Sigmoid colon (tissue), 7 donors: ENCODE measurements at regions of chr19 and their contacts with region 1.

Region 1: DNA sequence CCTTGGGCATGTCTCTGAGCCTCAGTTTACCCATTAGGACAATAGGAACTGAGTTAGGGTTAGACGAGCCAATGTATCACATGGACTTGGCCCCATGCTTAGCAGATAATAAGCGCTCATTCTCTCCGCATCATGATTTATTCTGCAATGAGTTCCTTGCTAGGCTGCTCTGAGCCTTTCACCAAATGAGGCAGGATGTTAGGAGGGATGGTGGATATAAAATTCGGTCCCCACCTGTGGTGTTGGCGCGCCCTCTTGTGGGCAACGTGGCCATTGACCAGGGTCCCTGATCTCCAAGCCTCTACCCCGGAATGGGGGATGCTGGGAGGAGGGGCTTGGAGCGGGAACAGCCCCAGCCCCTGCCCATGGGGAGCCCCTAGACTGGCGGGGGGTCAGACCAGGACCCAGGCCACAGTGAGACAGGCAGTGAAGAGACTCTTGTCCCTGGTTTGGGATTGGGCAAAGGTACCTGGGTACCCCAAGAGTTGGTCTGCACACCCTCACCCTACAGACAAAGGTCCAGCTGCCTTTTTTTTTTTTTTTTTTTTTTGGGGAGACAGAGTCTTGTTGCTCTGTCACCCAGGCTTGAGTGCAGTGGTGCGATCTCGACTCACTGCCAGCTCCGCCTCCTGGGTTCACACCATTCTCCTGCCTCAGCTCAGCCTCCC is 43.9 kb downstream of the CERS4 start:
- DNase-seq: peak; percentile 89
- H3K4me3 ChIP-seq: no peak overlapping the region
- H3K27ac ChIP-seq: peak overlapping the region in 1 of 4 donors; percentile 11
- H3K4me1 ChIP-seq: peaks cover 0 to 25% (median 21%) of the 10 kb centered on the region in 4 donors
- H3K27me3 ChIP-seq: no peaks in the 10 kb centered on the region
- CTCF ChIP-seq: peak; percentile 83 to 95 (median 90)
- EP300 ChIP-seq: no peak
- POLR2A ChIP-seq: no peak

Region 2: GRCh38 chr19:7852851-7853769 is 399.9 kb before region 1 on chr19:
- intact Hi-C with region 1: loop called (anchors 2 kb)
- DNase-seq: no peak
- H3K4me3 ChIP-seq: no peak overlapping the region
- H3K27ac ChIP-seq: peak overlapping the region in 2 of 4 donors; percentile 12 to 19
- H3K4me1 ChIP-seq: peaks cover 0 to 9% (median 7%) of the 10 kb centered on the region in 4 donors
- H3K27me3 ChIP-seq: peaks cover 0 to 48% (median 17%) of the 10 kb centered on the region in 3 donors
- CTCF ChIP-seq: peak; percentile 44 to 86 (median 60)
- EP300 ChIP-seq: no peak
- POLR2A ChIP-seq: no peak

Region 3: DNA sequence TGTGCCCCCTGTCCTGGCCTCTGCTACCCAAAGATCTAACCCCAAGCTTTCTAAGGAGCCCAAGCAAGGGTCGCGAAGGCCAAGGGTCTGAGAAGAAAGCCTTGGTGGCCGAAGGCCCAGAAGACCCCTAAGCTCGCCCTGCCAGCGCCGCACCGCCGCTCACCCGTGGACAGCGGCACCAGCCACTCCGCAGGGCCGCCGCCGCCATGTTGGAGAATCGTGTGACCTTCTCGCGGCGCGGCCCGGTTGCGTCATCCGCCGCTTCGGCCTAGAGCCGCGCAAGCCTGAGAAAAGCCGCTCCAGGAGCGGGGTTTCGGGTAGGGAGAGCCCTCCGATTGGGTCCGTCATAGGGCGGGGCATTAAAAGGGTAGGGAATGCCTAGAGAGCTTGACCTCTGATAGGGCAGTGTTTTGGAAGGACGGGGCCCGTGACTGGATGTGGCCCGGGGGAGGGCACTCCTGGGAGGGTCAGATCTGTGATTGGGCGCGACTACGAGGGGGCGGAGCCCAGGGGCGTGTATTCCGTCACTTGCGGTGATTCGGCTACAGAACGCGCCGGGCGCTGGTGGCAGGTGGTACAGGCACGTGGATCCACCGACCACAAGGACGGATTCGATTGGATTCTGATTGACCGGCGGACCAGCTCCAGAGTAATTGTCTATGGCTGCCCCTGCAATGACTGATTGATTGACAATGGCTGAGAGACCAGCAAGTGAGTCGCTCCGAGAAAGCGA is 309.4 kb before region 1 on chr19 and contains the start of gene TIMM44:
- intact Hi-C with region 1: loop called (anchors 1 kb)
- DNase-seq: peak; percentile 100
- H3K4me3 ChIP-seq: peak within 1 kb of the TSS; percentile 68 to 87 (median 75)
- H3K27ac ChIP-seq: peak within 1 kb of the TSS; percentile 94 to 99 (median 96)
- H3K4me1 ChIP-seq: peaks cover 3 to 53% (median 37%) of the 10 kb centered on the region in 4 donors
- H3K27me3 ChIP-seq: no peaks in the 10 kb centered on the region
- CTCF ChIP-seq: no peak
- EP300 ChIP-seq: no peak
- POLR2A ChIP-seq: peak; percentile 60 to 71
- total RNA-seq, gene TIMM44: 51.7 to 80.1 (median 78.6) TPM

Region 4: DNA sequence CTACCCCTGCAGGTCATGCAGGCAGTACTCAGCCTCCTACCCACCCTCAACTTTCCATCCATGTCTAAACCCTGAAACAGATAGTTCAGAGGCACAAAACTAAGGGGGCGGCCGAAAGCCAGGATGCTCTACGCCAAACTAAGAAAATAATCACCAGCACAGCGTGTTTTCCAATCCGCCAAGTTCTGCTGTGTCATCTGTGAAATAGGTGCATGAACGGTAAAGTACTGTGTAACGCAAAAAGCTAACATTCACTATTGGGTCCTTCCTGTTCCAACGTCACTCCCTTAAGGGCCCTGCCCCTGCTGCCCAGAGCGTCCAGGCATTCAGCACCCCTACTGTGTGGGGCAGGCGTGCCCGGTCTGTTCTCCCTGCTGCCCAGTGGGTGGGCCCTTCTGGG is 297.4 kb before region 1 on chr19:
- intact Hi-C with region 1: no loop called
- DNase-seq: no peak
- H3K4me3 ChIP-seq: no peak overlapping the region
- H3K27ac ChIP-seq: no peak overlapping the region
- H3K4me1 ChIP-seq: peaks cover 0 to 4% (median 0%) of the 10 kb centered on the region in 4 donors
- H3K27me3 ChIP-seq: no peaks in the 10 kb centered on the region
- CTCF ChIP-seq: no peak
- EP300 ChIP-seq: no peak
- POLR2A ChIP-seq: no peak

Region 5: GRCh38 chr19:8005534-8006256 is 247.4 kb before region 1 on chr19 and contains the start of gene ELAVL1:
- intact Hi-C with region 1: loop called (anchors 5 kb)
- DNase-seq: peak; percentile 93
- H3K4me3 ChIP-seq: peak within 1 kb of the TSS; percentile 63 to 85 (median 71)
- H3K27ac ChIP-seq: peak within 1 kb of the TSS; percentile 83 to 92 (median 86)
- H3K4me1 ChIP-seq: peaks cover 0 to 50% (median 44%) of the 10 kb centered on the region in 4 donors
- H3K27me3 ChIP-seq: no peaks in the 10 kb centered on the region
- CTCF ChIP-seq: no peak
- EP300 ChIP-seq: no peak
- POLR2A ChIP-seq: no peak
- total RNA-seq, gene ELAVL1: 15.8 to 20.3 (median 17.1) TPM

Region 6: DNA sequence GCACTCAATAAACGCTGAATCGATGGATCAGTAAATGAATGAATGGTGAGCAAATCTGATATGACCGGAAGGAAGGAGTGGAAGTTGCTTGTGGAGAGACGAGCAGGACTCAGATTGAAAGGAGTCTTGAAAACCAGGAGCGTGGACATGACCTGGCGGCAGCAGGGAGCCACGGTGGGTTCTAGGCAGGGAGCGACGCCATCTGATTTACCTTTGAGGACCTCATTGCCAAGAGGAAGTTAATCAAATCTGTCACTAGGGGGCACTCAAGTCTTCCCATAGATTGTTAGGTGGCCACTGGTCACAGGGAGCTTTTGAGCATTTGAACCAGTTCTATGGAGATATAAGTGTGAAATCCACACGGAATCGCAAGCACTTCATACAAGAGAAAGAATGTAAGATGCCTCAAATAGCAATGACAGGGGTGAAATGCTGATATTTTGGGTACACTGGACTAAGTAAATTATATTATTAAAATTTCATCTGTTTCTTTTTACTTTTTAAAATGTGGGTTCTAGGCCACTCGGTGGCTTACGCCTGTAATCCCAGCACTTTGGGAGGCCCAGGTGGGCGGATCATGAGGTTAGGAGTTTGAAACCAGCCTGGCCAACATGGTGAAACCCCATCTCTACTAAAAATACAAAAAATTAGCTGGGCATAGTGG is 94.5 kb before region 1 on chr19:
- intact Hi-C with region 1: loop called (anchors 1 kb)
- DNase-seq: peak; percentile 74
- H3K4me3 ChIP-seq: no peak overlapping the region
- H3K27ac ChIP-seq: no peak overlapping the region
- H3K4me1 ChIP-seq: peaks cover 0 to 18% (median 11%) of the 10 kb centered on the region in 4 donors
- H3K27me3 ChIP-seq: no peaks in the 10 kb centered on the region
- CTCF ChIP-seq: peak; percentile 42 to 62 (median 60)
- EP300 ChIP-seq: no peak
- POLR2A ChIP-seq: no peak

Region 7: GRCh38 chr19:8208922-8209461 is 44.1 kb before region 1 on chr19 and contains the start of gene CERS4:
- intact Hi-C with region 1: loop called (anchors 2 kb)
- DNase-seq: peak; percentile 90
- H3K4me3 ChIP-seq: peak within 1 kb of the TSS; percentile 68 to 93 (median 78)
- H3K27ac ChIP-seq: peak within 1 kb of the TSS; percentile 70 to 84 (median 79)
- H3K4me1 ChIP-seq: peaks cover 0 to 24% (median 19%) of the 10 kb centered on the region in 4 donors
- H3K27me3 ChIP-seq: no peaks in the 10 kb centered on the region
- CTCF ChIP-seq: no peak
- EP300 ChIP-seq: no peak
- POLR2A ChIP-seq: no peak
- total RNA-seq, gene CERS4: 24.1 to 40.0 (median 30.2) TPM